Right cardiac atrium (tissue), 5 donors: ENCODE measurements at regions of chr12 and their contacts with region 1.

Region 1: DNA sequence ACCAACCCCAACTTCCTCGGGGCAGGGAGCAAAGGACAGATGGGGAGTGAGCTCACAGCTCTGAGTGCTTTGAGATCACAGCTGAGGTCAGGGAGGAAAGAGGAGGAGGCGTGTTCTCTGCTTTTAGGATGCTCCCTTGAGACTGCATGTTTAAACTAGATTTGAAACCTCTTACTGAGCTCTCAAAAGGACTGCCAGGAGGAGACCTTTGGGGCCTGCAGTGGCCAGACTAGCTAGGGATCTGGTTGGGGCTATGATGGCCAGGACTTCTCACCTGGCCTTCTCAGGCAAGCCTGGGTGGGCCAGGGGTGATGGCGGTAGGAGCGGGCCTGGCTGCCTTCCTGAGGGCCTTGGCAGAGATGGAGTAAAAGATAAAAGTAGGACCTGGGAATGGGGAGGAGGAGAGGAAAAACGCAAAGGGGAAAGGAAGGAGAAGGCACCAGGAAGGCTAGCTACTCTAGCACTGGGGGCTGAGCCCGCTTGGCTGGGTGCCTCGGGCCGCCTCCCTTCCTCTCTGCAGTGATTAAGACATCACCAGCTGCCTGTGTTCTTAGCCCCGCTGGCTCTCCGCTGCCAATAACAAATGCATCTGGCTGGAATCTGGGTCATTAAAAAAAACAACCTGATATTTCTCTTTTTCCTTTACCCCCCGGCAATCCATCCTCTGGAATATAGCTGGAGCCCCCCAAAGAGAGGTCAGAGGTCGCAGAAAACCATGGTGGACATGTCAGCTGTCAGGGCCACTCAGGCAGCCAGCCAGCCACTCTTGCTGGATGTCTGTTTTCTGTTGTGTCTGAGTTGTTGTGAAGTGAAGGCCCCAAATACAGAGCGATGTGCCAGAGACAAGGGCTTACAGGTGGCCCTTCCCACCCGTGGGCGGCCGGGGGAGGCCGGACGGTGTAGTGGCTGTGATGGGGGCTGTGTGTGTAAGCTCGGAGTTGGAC is 141.3 kb downstream of the TSPAN9 start:
- DNase-seq: peak; percentile 90 to 96 (median 95)
- ATAC-seq: peak; percentile 79 to 81
- H3K4me3 ChIP-seq: no peak overlapping the region
- H3K27ac ChIP-seq: peak overlapping the region; percentile 92
- H3K4me1 ChIP-seq: peaks cover 30% of the 10 kb centered on the region
- H3K27me3 ChIP-seq: no peaks in the 10 kb centered on the region

Region 2: GRCh38 chr12:3261782-3262359 is 43.4 kb after region 1 on chr12:
- intact Hi-C with region 1: loop called in 1 of 4 experiments (anchors 5 kb)
- DNase-seq: peak in 2 of 3 donors; percentile 62 to 64
- ATAC-seq: peak in 1 of 2 donors; percentile 23
- H3K4me3 ChIP-seq: no peak overlapping the region
- H3K27ac ChIP-seq: peak overlapping the region; percentile 60
- H3K4me1 ChIP-seq: peaks cover 33% of the 10 kb centered on the region
- H3K27me3 ChIP-seq: no peaks in the 10 kb centered on the region

Region 3: DNA sequence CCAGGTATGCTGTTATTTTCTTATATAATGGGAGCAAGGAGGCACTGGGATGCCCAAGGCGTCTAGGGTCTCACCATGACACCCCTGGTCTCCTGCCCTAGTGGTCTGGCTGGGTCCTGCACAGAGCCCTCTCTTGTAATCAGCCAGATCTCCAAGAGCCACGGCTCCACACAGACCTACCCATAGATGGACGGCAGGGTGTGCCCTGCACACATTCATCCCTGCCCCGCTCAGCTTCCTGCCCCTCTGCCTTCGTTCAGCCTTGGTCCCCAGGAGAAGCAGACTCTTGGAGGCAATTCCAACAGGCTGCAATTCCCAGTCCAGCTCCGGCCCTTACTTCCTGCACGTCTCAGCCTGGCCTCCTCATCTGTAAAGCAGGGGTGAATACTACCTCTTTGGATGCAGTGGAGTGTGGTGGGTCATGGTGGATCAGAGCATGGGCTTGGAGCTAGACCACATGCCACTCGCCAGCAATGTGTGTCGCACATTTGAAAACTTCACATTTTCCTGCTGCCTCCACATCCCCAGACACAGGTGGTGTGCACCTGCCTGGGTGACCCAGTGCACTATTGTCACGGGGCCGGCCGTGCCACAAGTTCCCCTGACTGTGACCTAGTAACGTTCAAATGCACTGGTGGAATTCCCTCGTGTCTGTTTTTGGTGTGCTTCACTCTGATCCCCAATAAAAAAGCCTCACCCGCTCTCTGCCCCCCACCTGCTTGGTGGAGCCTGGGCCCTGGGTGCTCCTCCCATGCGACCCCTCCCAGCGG is 101.4 kb after region 1 on chr12:
- intact Hi-C with region 1: no loop called
- DNase-seq: peak in 1 of 3 donors; percentile 34
- ATAC-seq: no peak
- H3K4me3 ChIP-seq: no peak overlapping the region
- H3K27ac ChIP-seq: no peak overlapping the region
- H3K4me1 ChIP-seq: peaks cover 3% of the 10 kb centered on the region
- H3K27me3 ChIP-seq: no peaks in the 10 kb centered on the region

Region 4: GRCh38 chr12:3667485-3667884 is 449.0 kb after region 1 on chr12:
- intact Hi-C with region 1: no loop called
- DNase-seq: no peak
- ATAC-seq: no peak
- H3K4me3 ChIP-seq: no peak overlapping the region
- H3K27ac ChIP-seq: no peak overlapping the region
- H3K4me1 ChIP-seq: peaks cover 2% of the 10 kb centered on the region
- H3K27me3 ChIP-seq: no peaks in the 10 kb centered on the region